Prostate gland (tissue), 2 donors: ENCODE measurements at regions of chr1 and their contacts with region 1.

Region 1: DNA sequence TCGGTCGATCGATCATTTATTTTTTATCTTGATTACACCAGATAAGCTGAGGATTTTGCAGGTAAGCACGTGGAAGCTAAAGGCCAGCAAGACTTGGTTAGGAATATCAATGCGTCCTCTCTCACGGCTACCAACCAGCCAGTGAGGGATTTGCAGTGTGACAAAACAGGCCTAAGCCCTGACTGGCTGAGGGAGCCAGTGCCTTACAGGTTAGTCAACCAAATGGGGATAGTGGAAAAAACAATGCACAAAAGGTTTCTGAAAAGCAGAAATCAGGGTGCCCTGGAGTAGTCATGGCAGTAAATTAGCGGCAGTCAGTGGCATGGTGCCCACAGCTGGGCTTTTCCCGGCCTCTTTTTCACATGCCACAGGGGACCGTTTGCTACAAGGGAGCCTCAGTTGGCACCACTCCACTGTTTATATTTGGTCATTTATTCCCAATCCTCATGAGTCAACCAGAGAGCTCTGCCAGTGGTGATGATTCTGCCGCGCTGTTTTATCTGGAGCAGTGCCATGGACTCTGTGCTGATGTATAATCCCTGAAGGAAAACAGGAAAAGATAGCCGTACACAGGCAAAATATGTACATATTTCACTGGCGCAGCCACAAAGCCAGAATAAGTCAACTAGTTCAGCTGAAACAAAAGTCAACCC is 167.6 kb downstream of the RHOU start:
- DNase-seq: peak; percentile 96
- H3K4me3 ChIP-seq: no peak overlapping the region
- H3K27ac ChIP-seq: peak overlapping the region; percentile 68 to 77
- H3K4me1 ChIP-seq: peaks cover 12% of the 10 kb centered on the region
- H3K27me3 ChIP-seq: no peaks in the 10 kb centered on the region
- CTCF ChIP-seq: no peak
- POLR2A ChIP-seq: no peak

Region 2: DNA sequence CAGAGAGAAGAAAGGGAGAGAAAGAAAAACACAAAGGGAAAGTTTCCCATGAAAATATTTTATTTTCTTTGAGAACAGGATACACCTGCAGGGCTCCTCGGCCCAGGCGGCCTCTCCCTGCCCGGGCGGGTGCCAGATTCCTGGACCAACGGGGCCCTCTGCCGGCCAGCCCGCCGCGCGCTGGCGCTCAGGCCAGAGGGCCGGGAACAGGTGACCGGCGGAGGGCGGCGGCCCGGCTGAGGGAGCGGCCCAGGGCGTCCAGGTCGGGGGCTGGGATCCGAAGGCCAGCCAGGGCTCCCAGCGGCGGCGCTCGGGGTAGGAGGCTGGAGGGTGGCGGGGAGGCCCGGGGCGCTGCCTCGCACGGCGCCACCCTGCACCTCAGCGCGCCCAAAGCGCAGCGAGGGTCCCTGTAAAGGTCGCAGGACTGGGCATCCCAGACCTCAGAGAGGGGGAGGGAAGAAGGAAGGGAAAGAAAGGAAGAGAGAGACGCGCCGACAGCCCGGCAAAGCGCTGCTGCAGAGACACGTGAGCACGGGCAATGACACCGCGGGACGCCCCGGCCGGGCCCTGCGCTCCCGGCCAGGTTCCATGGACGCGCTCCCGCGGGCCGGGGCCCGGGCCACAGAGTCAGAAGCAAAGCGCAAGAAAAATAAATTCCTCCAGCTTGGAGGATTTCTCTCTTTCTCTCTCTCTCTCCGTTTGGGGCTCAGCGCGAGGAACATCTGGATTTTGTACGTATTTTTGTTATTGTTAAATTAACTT is 956.1 kb before region 1 on chr1:
- intact Hi-C with region 1: no loop called
- DNase-seq: peak; percentile 74
- H3K4me3 ChIP-seq: peak overlapping the region; percentile 43 to 51
- H3K27ac ChIP-seq: peak overlapping the region; percentile 62 to 70
- H3K4me1 ChIP-seq: peaks cover 13% of the 10 kb centered on the region
- H3K27me3 ChIP-seq: no peaks in the 10 kb centered on the region
- CTCF ChIP-seq: peak; percentile 51 to 94 (median 85)
- POLR2A ChIP-seq: no peak

Region 3: GRCh38 chr1:228478912-228479711 is 423.8 kb before region 1 on chr1:
- intact Hi-C with region 1: no loop called
- DNase-seq: no peak
- H3K4me3 ChIP-seq: no peak overlapping the region
- H3K27ac ChIP-seq: no peak overlapping the region
- H3K4me1 ChIP-seq: no peaks in the 10 kb centered on the region
- H3K27me3 ChIP-seq: no peaks in the 10 kb centered on the region
- CTCF ChIP-seq: no peak
- POLR2A ChIP-seq: no peak

Region 4: DNA sequence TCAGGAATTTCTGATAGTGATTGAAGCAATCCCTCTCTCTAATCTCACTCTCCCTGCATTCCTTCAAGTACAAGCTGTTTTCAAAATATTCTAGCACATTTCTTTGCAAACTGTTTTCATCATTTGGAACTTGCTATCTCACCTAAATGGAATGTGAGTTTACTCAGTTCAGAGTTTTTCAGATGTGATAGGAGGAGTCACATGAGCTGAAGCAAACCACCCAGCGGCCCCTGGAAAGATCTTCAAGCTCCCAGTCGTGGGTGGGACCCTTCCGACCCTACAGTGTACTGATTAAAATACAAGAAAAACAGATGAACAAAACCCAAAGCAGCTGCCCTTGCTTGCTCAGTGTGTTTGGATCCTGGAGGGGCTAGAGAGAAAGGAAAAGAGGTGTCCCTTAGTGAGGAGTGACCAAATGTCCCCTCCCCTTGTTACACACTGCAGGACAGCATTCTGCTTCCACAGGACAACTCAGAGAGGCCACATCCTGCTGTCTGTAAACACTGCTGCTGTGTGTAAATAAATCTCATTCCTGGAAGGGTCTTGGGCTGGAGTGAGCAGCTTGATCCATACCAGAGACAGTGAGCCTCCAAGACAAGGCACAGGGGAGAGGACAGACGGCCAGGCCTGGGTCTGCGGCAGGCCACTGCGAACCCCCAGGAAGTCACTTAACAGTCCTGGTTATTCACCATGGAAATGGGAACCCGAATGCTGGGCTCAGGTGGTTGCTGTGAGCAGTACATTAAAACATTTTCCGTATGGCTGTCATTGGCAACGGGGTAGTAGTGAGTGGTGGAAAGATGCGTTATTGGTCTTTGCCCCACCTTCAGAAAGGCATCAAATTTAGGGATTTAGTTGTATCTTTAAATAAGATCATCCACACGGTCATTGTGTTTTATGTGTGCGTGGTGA is 61.5 kb after region 1 on chr1:
- intact Hi-C with region 1: loop called (anchors 10 kb)
- DNase-seq: no peak
- H3K4me3 ChIP-seq: no peak overlapping the region
- H3K27ac ChIP-seq: peak overlapping the region; percentile 22 to 45
- H3K4me1 ChIP-seq: peaks cover 3% of the 10 kb centered on the region
- H3K27me3 ChIP-seq: no peaks in the 10 kb centered on the region
- CTCF ChIP-seq: no peak
- POLR2A ChIP-seq: no peak